GM12878 (cell line): ENCODE measurements at regions of chr9 and their contacts with region 1.

Region 1: GRCh38 chr9:4126180-4126865 is 173.5 kb downstream of the GLIS3 start:
- DNase-seq: no peak
- ATAC-seq: no peak
- H3K4me3 ChIP-seq: no peak overlapping the region
- H3K27ac ChIP-seq: no peak overlapping the region
- H3K4me1 ChIP-seq: no peaks in the 10 kb centered on the region
- H3K27me3 ChIP-seq: no peaks in the 10 kb centered on the region
- CTCF ChIP-seq: no peak
- EP300 ChIP-seq: no peak
- POLR2A ChIP-seq: no peak
- RAD21 ChIP-seq: no peak

Region 2: DNA sequence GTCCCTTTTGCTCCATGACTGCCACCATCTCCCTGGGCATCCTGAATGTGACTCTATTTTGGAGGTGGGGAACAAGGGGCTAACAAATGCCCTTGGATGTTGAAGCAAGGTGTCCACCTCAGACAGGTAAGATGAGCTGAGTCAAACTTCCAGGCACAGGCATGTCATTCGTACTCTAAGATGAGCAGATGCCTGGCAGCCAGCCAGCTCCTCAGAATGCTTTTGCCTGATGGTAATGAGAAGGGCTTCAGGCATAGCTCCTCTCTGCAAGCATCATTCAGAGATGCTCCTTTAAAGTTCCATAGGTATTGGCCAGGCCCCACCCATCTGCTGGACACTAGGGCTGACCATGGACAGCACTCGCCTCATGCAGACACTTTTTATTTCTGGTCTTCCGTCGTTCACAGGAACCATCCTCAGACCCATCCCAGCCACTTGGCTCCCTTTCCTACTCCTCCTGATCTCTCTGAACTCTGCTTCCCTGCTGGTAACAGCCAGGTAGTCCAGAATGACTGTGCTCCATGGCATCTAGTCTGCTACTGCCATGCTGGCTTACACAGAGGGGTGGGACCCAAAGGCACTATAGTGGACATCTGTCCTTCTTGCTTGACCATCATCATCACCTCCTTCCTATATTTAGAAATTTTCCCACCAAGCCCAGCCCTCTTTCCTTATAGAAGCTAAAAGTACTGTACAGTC is 54.7 kb after region 1 on chr9:
- CTCF ChIA-PET with region 1: no interaction called
- POLR2A ChIA-PET with region 1: no interaction called
- RAD21 ChIA-PET with region 1: no interaction called
- SMC1A ChIA-PET with region 1: no interaction called
- in situ Hi-C with region 1: no loop called
- intact Hi-C with region 1: loop called (anchors 10 kb)
- DNase-seq: no peak
- ATAC-seq: no peak
- H3K4me3 ChIP-seq: no peak overlapping the region
- H3K27ac ChIP-seq: no peak overlapping the region
- H3K4me1 ChIP-seq: no peaks in the 10 kb centered on the region
- H3K27me3 ChIP-seq: no peaks in the 10 kb centered on the region
- CTCF ChIP-seq: no peak
- EP300 ChIP-seq: no peak
- POLR2A ChIP-seq: no peak
- RAD21 ChIP-seq: no peak